ENCODE measurements at regions of chr17 and their contacts with region 1.

Region 1: GRCh38 chr17:7280519-7281429 is 744 bp upstream of the SLC2A4 start:
- DNase-seq: peak; percentile 68
- ATAC-seq: peak; percentile 83
- H3K4me3 ChIP-seq: peak overlapping the region; percentile 26; the same call in 1 of the 2 replicates
- H3K27ac ChIP-seq: no peak overlapping the region
- H3K4me1 ChIP-seq: peaks cover 2% of the 10 kb centered on the region; the same call in 1 of the 2 replicates
- H3K27me3 ChIP-seq: peaks cover 24% of the 10 kb centered on the region; the same call in 1 of the 2 replicates
- CTCF ChIP-seq: peak; percentile 96
- POLR2A ChIP-seq: peak; percentile 55
- RAD21 ChIP-seq: peak; percentile 96

Region 2: GRCh38 chr17:7239091-7240027 is 41.4 kb before region 1 on chr17 and contains the start of gene PHF23:
- CTCF ChIA-PET with region 1: no interaction called
- POLR2A ChIA-PET with region 1: no interaction called
- dilution Hi-C with region 1: no loop called
- in situ Hi-C with region 1: no loop called
- intact Hi-C with region 1: no loop called
- DNase-seq: peak; percentile 99
- ATAC-seq: peak; percentile 70
- H3K4me3 ChIP-seq: peak within 1 kb of the TSS; percentile 98
- H3K27ac ChIP-seq: peak within 1 kb of the TSS; percentile 97
- H3K4me1 ChIP-seq: peaks cover 14% of the 10 kb centered on the region
- H3K27me3 ChIP-seq: no peaks in the 10 kb centered on the region
- CTCF ChIP-seq: no peak
- POLR2A ChIP-seq: no peak
- RAD21 ChIP-seq: no peak
- total RNA-seq, gene PHF23: 44.8 and 45.5 TPM in 2 replicates

Region 3: DNA sequence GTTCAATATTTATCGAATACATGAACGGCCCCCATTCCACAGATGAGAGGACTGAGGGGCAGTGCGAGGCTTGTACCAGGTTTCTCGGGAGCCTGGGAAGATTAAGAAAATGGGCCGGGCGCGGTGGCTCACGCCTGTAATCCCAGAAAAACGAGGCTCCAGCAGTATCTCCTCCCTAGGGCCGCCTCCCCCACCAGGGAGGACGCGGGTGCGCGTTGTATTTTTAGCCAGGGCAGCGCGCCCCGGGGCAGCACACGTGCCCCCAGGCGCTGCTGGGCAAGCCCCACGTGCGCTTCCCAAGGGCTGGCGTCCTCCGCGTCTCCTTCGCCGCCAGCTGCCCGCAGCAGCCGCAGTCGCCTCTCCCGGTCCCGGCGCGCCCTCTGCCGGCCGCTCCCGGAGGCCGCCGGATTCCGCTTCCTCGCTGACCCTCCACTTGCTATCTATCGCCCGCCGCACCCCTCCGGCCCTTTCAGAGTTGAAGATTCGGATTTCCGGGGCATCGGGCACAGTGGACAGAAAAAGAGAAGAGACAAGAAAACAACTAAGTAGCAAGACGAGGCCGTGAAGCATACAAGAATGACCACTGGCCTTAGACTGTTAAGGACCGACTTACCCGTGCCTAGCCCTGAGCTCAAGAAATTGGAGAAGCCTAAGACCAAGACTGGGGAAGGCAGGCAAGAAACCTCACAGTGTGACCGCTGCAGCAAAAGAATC is 15.6 kb after region 1 on chr17:
- CTCF ChIA-PET with region 1: interaction called, 17 read pairs
- POLR2A ChIA-PET with region 1: no interaction called
- dilution Hi-C with region 1: no loop called
- in situ Hi-C with region 1: no loop called
- intact Hi-C with region 1: loop called (anchors 1 kb)
- DNase-seq: peak; percentile 74
- ATAC-seq: peak; percentile 93
- H3K4me3 ChIP-seq: no peak overlapping the region; the same call in 1 of the 2 replicates
- H3K27ac ChIP-seq: no peak overlapping the region
- H3K4me1 ChIP-seq: peaks cover 3% of the 10 kb centered on the region
- H3K27me3 ChIP-seq: peaks cover 44% of the 10 kb centered on the region
- CTCF ChIP-seq: peak; percentile 94
- POLR2A ChIP-seq: 0 out of 2 replicates have a peak, but pooled peaks have one; percentile 39
- RAD21 ChIP-seq: peak; percentile 95

Region 4: DNA sequence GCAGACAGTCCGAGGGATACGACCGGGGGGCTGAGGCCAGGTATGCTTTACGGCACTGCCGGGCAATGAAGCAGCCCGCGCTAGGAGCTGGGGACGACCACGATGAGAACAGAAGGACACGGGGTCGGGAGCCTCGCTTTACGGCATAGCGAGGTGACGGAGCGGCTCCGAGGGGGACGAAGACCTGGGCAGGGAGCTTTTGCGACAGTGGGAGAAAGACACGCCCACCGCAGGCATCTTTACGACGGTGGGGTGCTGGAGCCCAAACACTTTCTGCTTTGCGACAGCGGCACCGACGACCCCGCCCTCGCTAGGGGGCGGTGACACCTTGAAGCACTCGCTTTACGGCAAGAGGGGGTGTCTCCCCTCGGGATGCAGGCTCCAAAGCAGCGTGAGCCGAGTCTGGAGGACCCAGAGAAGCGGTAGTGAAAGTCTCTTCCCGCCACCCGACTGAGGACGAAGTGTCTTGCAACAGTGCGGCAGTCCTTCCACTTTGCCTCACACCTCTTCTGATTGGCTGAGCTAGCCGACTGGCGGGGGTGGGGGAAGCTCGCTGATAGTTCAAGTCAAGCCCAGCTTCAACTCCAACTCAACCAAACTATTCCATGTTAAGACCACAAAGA is 48.7 kb after region 1 on chr17:
- CTCF ChIA-PET with region 1: no interaction called
- POLR2A ChIA-PET with region 1: no interaction called
- dilution Hi-C with region 1: no loop called
- in situ Hi-C with region 1: loop called (anchors 5 kb)
- intact Hi-C with region 1: no loop called
- DNase-seq: peak; percentile 99
- ATAC-seq: peak; percentile 83
- H3K4me3 ChIP-seq: peak overlapping the region; percentile 86
- H3K27ac ChIP-seq: peak overlapping the region; percentile 79
- H3K4me1 ChIP-seq: peaks cover 5% of the 10 kb centered on the region; the same call in 1 of the 2 replicates
- H3K27me3 ChIP-seq: peaks cover 2% of the 10 kb centered on the region
- CTCF ChIP-seq: no peak
- POLR2A ChIP-seq: no peak
- RAD21 ChIP-seq: no peak

Region 5: GRCh38 chr17:7589204-7589868 is 308.6 kb after region 1 on chr17:
- CTCF ChIA-PET with region 1: no interaction called
- POLR2A ChIA-PET with region 1: no interaction called
- dilution Hi-C with region 1: no loop called
- in situ Hi-C with region 1: no loop called
- intact Hi-C with region 1: loop called (anchors 2 kb)
- DNase-seq: peak; percentile 83
- ATAC-seq: peak; percentile 64
- H3K4me3 ChIP-seq: no peak overlapping the region
- H3K27ac ChIP-seq: no peak overlapping the region; the same call in 1 of the 2 replicates
- H3K4me1 ChIP-seq: peaks cover 32% of the 10 kb centered on the region
- H3K27me3 ChIP-seq: no peaks in the 10 kb centered on the region
- CTCF ChIP-seq: peak; percentile 79
- POLR2A ChIP-seq: peak; percentile 41; the same call in 1 of the 2 replicates
- RAD21 ChIP-seq: peak; percentile 78